ENCODE measurements at regions of chr1 and their contacts with region 1.

Region 1: DNA sequence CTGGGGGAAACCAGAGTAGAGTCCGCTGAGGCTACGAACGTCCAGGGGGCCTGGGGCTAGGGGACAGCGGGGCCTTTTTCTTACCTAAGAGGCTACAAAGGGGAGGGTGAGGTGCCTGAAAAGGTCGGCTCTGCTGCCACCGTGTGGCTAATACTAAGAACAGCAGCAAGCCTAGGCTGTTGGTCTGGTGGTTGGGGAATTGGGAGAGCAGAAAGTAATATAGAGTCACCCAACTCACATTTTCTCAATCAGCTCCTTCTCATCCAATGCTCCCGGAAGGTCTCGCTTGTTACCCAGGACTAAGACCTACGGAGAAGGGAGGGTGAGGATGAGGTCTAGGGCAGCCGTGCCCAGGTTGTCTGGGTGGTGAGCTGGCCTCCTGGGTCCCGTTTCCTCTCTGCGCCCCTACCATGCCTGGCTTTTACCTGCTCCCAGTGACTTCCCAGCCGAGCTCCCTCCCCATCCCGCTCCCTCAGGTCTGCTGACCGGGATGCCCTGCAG is 9.3 kb downstream of the ARL8A start:
- DNase-seq: peak; percentile 86
- H3K4me3 Mint-ChIP-seq: no peak overlapping the region
- H3K27ac Mint-ChIP-seq: no peak overlapping the region
- H3K4me1 Mint-ChIP-seq: peaks cover 8% of the 10 kb centered on the region
- H3K27me3 Mint-ChIP-seq: no peaks in the 10 kb centered on the region
- CTCF ChIP-seq: peak; percentile 98

Region 2: GRCh38 chr1:201970334-201971159 is 164.7 kb before region 1 on chr1:
- CTCF ChIA-PET with region 1: interaction called, 13 read pairs
- POLR2A ChIA-PET with region 1: no interaction called
- intact Hi-C with region 1: no loop called
- DNase-seq: no peak
- H3K4me3 Mint-ChIP-seq: no peak overlapping the region
- H3K27ac Mint-ChIP-seq: no peak overlapping the region
- H3K4me1 Mint-ChIP-seq: peaks cover 15% of the 10 kb centered on the region
- H3K27me3 Mint-ChIP-seq: peaks cover 8% of the 10 kb centered on the region
- CTCF ChIP-seq: no peak

Region 3: DNA sequence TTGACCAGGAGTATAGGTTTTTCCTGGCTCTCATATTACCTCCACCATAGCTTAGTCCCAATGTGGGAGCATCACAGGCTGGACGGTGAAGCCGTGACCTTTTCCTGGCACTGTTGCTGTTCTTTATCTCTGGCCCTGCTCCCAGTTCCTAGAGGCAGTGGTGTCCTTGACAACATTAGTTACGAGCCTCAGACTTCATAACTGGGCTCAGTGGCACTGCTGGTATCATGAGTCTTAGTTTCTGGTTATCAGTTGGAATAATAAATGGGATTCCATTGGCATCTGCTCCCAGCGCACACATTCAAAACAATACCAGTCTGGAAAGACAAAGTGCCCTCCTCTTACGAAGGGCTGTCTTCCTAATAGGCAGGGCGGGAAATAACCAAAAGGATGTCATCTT is 144.8 kb before region 1 on chr1:
- CTCF ChIA-PET with region 1: interaction called, 34 read pairs
- POLR2A ChIA-PET with region 1: no interaction called
- intact Hi-C with region 1: no loop called
- DNase-seq: no peak
- H3K4me3 Mint-ChIP-seq: no peak overlapping the region
- H3K27ac Mint-ChIP-seq: peak overlapping the region; percentile 16
- H3K4me1 Mint-ChIP-seq: peaks cover 14% of the 10 kb centered on the region
- H3K27me3 Mint-ChIP-seq: no peaks in the 10 kb centered on the region
- CTCF ChIP-seq: no peak

Region 4: DNA sequence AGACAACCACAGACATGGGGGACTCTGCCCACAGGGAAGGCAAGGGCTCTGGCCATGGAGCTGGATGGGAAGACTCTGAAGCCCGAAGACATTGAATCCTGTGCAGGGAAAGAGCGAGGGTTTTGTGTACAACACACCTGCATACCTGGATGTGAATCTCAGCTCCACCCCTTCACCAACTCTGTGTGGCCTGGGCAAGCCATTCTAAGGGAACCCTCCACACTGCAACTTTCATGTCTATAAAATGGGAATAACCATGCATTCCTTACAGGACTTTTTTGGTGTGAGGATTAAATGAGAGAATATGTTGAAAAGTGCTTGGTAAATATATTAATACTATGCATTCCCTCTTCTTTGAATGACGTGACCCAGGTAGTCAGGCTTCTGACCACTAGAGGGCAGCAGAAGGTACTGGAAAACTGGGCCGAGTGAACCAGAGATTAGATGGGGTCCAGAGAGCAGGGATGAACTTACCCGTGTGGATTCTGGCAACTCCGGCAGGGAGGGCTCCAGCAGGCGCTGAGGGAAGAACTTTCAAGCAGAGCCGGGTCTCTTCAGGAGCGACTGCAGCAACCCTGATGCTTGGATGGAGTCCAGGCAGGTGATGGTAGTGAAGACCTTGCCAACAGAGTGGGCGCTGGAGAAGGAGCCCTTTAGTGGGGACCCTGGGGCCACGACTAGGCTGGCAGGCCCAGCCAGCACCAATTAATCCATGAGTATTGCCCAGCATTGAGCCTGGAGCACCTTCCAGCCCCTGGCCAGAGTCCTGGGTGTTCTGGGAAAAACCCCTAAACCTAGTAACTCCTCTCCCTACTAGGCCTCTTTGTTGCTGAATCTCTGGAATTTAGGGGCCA is 125.7 kb before region 1 on chr1:
- CTCF ChIA-PET with region 1: interaction called, 1,380 read pairs
- POLR2A ChIA-PET with region 1: interaction called, 6 read pairs
- intact Hi-C with region 1: loop called (anchors 1 kb)
- DNase-seq: peak; percentile 95
- H3K4me3 Mint-ChIP-seq: no peak overlapping the region
- H3K27ac Mint-ChIP-seq: no peak overlapping the region
- H3K4me1 Mint-ChIP-seq: peaks cover 26% of the 10 kb centered on the region
- H3K27me3 Mint-ChIP-seq: no peaks in the 10 kb centered on the region
- CTCF ChIP-seq: peak; percentile 97

Region 5: DNA sequence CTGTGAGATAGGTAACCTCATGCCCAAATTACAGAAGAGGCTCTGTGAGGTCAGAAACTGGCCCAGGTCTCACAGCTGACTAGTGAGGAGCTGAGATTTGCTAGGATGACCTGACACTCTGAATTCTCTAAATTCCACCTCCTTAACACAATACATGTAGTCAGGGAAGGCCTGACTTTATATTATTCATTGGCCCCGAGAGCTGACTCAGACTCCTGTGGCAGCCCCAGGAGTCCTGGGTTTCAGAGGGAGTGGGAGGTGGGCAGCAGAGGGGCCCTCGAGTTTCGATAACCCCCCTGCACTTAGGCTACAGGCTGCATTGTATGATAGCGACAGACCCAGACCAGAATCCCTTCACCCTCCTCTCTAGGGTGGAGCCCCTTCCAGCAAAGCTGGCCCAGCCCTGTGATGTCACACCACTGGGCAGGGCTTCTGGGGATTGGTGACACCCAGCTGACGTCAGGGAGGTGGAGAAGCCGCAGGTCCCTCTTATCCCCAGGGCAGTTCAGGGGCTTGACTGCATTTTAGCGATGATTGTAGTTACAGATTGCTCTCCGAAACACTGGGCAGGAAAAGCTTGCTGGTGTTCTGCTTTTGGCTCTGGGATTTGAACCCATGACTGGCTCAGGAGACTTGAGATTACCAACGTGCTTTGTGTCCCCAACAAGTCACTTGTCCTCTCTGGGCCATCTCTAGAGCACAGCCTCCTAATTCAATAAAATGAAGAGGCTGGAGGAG is 29.6 kb before region 1 on chr1:
- CTCF ChIA-PET with region 1: interaction called, 12 read pairs
- POLR2A ChIA-PET with region 1: interaction called, 3 read pairs
- intact Hi-C with region 1: no loop called
- DNase-seq: peak; percentile 76
- H3K4me3 Mint-ChIP-seq: no peak overlapping the region
- H3K27ac Mint-ChIP-seq: peak overlapping the region; percentile 2
- H3K4me1 Mint-ChIP-seq: peaks cover 40% of the 10 kb centered on the region
- H3K27me3 Mint-ChIP-seq: no peaks in the 10 kb centered on the region
- CTCF ChIP-seq: no peak

Region 6: GRCh38 chr1:202122639-202123335 is 12.5 kb before region 1 on chr1 and contains the start of gene GPR37L1:
- CTCF ChIA-PET with region 1: interaction called, 155 read pairs
- POLR2A ChIA-PET with region 1: interaction called, 5 read pairs
- intact Hi-C with region 1: no loop called
- DNase-seq: peak; percentile 30
- H3K4me3 Mint-ChIP-seq: no peak within 1 kb of the TSS
- H3K27ac Mint-ChIP-seq: no peak within 1 kb of the TSS
- H3K4me1 Mint-ChIP-seq: no peaks in the 10 kb centered on the region
- H3K27me3 Mint-ChIP-seq: peaks cover 17% of the 10 kb centered on the region
- CTCF ChIP-seq: peak; percentile 30
- total RNA-seq, gene GPR37L1: not detected in 2 replicates